ENCODE measurements at regions of chr19 and their contacts with region 1.

Region 1: GRCh38 chr19:12974301-12975220 is 5.2 kb downstream of the DAND5 start:
- DNase-seq: peak in 1 of 10 donors; percentile 92
- H3K4me3 ChIP-seq: no peak overlapping the region
- H3K27ac ChIP-seq: peak overlapping the region in 1 of 59 donors; percentile 84
- H3K27me3 ChIP-seq: no peaks in the 10 kb centered on the region
- CTCF ChIP-seq: no peak

Region 2: DNA sequence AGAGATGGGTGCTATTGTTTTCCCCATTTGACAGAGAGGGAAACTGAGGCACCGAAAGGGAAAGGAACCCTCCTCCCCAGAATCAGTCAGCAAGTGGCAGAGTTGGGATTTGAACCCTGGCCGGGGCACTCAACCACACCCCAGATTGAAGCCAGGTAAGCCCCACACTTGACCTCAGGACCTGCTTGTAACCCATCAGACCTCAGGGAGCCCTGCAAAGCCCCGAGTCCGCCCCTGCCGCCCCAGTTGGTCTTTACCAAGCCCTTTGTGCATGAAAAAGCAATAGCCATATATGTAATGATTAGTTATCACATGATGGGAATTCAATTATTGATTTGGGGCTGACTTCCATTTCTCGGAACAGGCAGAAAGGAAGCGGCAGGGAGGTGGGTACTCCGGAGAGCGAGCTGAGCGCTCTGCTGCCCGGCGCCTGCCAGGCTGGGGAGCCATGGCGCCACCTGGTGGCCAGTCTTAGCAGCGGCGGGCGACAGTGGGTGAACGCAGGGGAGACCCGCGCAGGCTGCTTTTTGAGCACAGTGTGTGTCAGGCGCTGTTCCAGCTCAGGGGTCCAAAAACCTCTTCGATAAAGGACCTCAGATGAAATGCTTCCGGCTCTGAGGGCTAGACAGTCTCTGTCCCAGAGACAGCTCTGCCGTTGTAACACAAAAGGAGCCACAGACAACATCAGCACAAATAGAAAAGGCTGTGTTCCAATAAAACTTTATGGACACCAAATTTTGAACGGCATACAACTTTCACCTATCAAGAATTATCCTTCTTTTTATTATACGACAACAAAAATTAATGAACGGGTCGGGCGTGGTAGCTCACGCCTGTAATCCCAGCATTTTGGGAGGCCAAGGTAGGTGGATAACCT is 614.6 kb after region 1 on chr19:
- intact Hi-C with region 1: loop called in 1 of 2 experiments (anchors 5 kb)
- DNase-seq: peak; percentile 55 to 88 (median 72)
- H3K4me3 ChIP-seq: peak overlapping the region in 36 of 59 donors; percentile 1 to 52 (median 28)
- H3K27ac ChIP-seq: no peak overlapping the region
- H3K27me3 ChIP-seq: peaks cover 0 to 4% (median 0%) of the 10 kb centered on the region in 45 donors
- CTCF ChIP-seq: peak; percentile 89 to 100 (median 99)

Measured in dorsolateral prefrontal cortex (tissue), 120 donors.